Calu3 (cell line): ENCODE measurements at regions of chr2 and their contacts with region 1.

Region 1: DNA sequence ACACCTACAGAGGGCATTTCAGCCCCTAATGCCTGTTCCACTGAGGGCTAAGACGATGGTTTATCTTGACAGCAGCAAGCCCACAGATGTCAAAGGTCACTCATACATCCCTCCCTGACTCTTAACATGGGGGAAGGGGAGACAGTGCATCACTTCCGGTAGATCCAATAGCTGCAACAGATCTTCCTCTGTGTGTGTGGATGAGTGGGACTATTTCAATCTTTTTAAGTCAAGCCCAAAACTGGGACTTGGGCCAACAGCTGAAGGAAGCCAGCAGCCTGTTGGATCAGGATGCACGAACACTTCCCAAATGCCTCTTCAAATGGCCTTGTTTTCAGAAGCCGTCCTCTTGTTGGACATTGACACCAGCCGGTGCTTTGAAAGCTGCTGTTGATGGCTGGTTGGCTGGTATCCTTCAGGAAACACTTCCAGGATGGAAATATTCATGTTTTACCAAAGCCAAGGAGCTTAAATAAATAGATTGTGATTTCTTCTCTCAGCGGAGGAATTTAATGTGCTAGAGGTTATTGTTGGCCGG is 59.2 kb downstream of the IL1R2 start:
- DNase-seq: no peak
- H3K4me3 Mint-ChIP-seq: no peak overlapping the region
- H3K27ac Mint-ChIP-seq: no peak overlapping the region
- H3K4me1 Mint-ChIP-seq: peaks cover 15% of the 10 kb centered on the region
- H3K27me3 Mint-ChIP-seq: no peaks in the 10 kb centered on the region
- CTCF ChIP-seq: no peak

Region 2: GRCh38 chr2:102033031-102033749 is 17.7 kb before region 1 on chr2:
- CTCF ChIA-PET with region 1: interaction called, 16 read pairs
- intact Hi-C with region 1: no loop called
- DNase-seq: peak; percentile 83
- H3K4me3 Mint-ChIP-seq: peak overlapping the region; percentile 33
- H3K27ac Mint-ChIP-seq: peak overlapping the region; percentile 84
- H3K4me1 Mint-ChIP-seq: peaks cover 18% of the 10 kb centered on the region
- H3K27me3 Mint-ChIP-seq: no peaks in the 10 kb centered on the region
- CTCF ChIP-seq: no peak

Region 3: DNA sequence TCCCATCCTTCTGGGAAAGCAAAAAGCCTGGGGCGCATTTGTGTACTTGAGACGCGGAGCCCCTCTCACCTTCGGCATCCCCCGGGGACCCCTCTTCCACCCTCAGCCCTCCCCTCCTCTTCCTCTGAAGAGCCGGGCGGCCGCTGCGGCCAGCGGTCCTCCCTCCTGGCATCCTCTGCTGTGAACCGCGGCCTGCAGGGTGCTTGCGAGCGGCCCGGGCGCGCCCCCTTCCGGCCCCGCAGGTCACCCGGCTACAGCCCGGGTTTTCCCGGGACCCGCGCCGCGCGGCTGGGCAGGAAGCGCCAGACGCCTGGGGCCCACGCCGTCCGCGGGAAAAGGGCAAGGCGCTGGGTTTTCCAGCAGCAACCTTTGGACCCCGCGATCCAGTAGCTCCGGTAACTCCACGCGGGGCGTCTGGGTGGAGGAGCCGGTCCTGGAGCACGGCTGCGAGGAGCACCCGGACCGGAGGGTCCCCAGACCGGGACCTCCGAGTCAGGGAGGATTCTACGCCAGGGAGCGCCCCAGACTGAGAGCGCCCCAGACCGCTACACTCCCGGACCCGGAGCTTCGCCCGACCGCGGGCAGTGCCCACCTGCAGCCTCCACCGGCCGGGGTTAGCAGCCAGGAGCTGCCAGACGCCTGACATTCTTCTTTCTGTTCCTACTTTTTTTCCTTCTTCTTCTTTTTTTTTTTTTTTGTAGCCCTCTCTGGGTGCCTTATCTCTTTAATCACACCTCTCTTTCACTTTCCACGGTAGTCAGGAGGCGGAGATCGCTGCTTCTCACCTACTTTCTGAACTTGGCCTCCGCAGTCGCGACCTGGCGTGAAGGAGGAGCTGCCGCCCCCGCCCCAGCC is 304.8 kb after region 1 on chr2 and contains the start of gene IL18R1:
- CTCF ChIA-PET with region 1: no interaction called
- intact Hi-C with region 1: no loop called
- DNase-seq: peak; percentile 87
- H3K4me3 Mint-ChIP-seq: peak within 1 kb of the TSS; percentile 84
- H3K27ac Mint-ChIP-seq: peak within 1 kb of the TSS; percentile 77
- H3K4me1 Mint-ChIP-seq: no peaks in the 10 kb centered on the region
- H3K27me3 Mint-ChIP-seq: peaks cover 14% of the 10 kb centered on the region
- CTCF ChIP-seq: peak; percentile 69
- total RNA-seq, gene IL18R1: 1.5 and 2.1 TPM in 2 replicates